T-cell (primary cell): ENCODE measurements at regions of chr20 and their contacts with region 1.

Region 1: DNA sequence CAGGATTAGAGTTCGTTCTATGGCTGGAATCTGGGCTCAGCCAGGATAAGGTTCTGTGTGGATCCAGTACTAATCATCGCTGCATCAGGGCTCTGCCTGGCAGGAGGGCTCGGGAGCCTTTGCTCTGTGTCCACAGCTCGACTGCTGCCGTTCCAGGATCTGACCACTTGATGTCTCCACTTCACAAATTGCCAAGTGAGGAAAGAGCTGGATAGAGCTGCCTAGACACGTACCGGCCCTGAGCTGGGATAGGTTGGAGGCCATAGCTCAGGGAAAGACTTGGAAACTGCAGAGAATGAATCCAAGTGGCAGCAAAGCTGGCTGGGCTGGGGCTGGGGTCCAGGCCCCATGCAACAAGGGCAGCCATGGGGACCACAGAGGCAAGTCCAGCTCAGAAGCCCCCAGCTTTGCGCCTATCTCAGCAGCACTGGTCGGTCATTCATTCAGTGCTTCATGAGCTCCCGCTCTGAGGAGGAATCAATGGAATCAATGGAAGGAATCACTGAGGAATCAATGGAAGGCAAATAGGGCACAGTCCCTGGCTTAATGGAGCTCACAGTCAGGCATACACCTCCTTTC is 38.0 kb upstream of the TOP1 start:
- DNase-seq: peak in 33 of 35 experiments; percentile 22 to 76 (median 47)
- ATAC-seq: peak; percentile 75 to 86 (median 78)
- H3K4me3 ChIP-seq: no peak overlapping the region
- H3K4me3 Mint-ChIP-seq: peak overlapping the region in 2 of 3 donors; percentile 26 to 44
- H3K27ac ChIP-seq: no peak overlapping the region
- H3K27ac Mint-ChIP-seq: peak overlapping the region; percentile 48 to 82
- H3K4me1 ChIP-seq: peaks cover 15 to 27% of the 10 kb centered on the region in 2 experiments
- H3K4me1 Mint-ChIP-seq: peaks cover 34 to 37% (median 36%) of the 10 kb centered on the region in 3 donors
- H3K27me3 ChIP-seq: peaks cover 0 to 2% of the 10 kb centered on the region in 2 experiments
- H3K27me3 Mint-ChIP-seq: no peaks in the 10 kb centered on the region

Region 2: GRCh38 chr20:40728470-40728869 is 262.2 kb before region 1 on chr20:
- CTCF ChIA-PET with region 1: no interaction called
- POLR2A ChIA-PET with region 1: no interaction called
- DNase-seq: no peak
- ATAC-seq: no peak
- H3K4me3 ChIP-seq: no peak overlapping the region
- H3K4me3 Mint-ChIP-seq: no peak overlapping the region
- H3K27ac ChIP-seq: no peak overlapping the region
- H3K27ac Mint-ChIP-seq: no peak overlapping the region
- H3K4me1 ChIP-seq: no peaks in the 10 kb centered on the region
- H3K4me1 Mint-ChIP-seq: no peaks in the 10 kb centered on the region
- H3K27me3 ChIP-seq: peaks cover 0 to 13% of the 10 kb centered on the region in 2 experiments
- H3K27me3 Mint-ChIP-seq: peaks cover 9 to 10% of the 10 kb centered on the region in 2 donors

Region 3: GRCh38 chr20:40980106-40980827 is 10.4 kb before region 1 on chr20:
- CTCF ChIA-PET with region 1: interaction called, 3 to 15 read pairs
- POLR2A ChIA-PET with region 1: no interaction called
- DNase-seq: no peak
- ATAC-seq: no peak
- H3K4me3 ChIP-seq: no peak overlapping the region
- H3K4me3 Mint-ChIP-seq: no peak overlapping the region
- H3K27ac ChIP-seq: no peak overlapping the region
- H3K27ac Mint-ChIP-seq: no peak overlapping the region
- H3K4me1 ChIP-seq: no peaks in the 10 kb centered on the region
- H3K4me1 Mint-ChIP-seq: no peaks in the 10 kb centered on the region
- H3K27me3 ChIP-seq: peaks cover 0 to 13% of the 10 kb centered on the region in 2 experiments
- H3K27me3 Mint-ChIP-seq: peaks cover 22 to 28% of the 10 kb centered on the region in 2 donors

Region 4: GRCh38 chr20:41095110-41095969 is 104.7 kb after region 1 on chr20:
- CTCF ChIA-PET with region 1: interaction called, 28 to 89 read pairs
- POLR2A ChIA-PET with region 1: interaction called in 1 of 2 experiments, 3 read pairs
- DNase-seq: peak; percentile 8 to 81 (median 48)
- ATAC-seq: peak; percentile 60 to 70 (median 65)
- H3K4me3 ChIP-seq: no peak overlapping the region
- H3K4me3 Mint-ChIP-seq: no peak overlapping the region
- H3K27ac ChIP-seq: no peak overlapping the region
- H3K27ac Mint-ChIP-seq: peak overlapping the region in 1 of 2 donors; percentile 55
- H3K4me1 ChIP-seq: no peaks in the 10 kb centered on the region
- H3K4me1 Mint-ChIP-seq: peaks cover 0 to 5% (median 0%) of the 10 kb centered on the region in 3 donors
- H3K27me3 ChIP-seq: no peaks in the 10 kb centered on the region
- H3K27me3 Mint-ChIP-seq: no peaks in the 10 kb centered on the region

Region 5: GRCh38 chr20:41121399-41121798 is 130.8 kb after region 1 on chr20:
- CTCF ChIA-PET with region 1: no interaction called
- POLR2A ChIA-PET with region 1: interaction called in 1 of 2 experiments, 11 read pairs
- DNase-seq: no peak
- ATAC-seq: peak in 1 of 4 experiments; percentile 45
- H3K4me3 ChIP-seq: no peak overlapping the region
- H3K4me3 Mint-ChIP-seq: no peak overlapping the region
- H3K27ac ChIP-seq: no peak overlapping the region
- H3K27ac Mint-ChIP-seq: peak overlapping the region; percentile 59 to 61
- H3K4me1 ChIP-seq: peaks cover 0 to 3% of the 10 kb centered on the region in 2 experiments
- H3K4me1 Mint-ChIP-seq: peaks cover 0 to 10% (median 2%) of the 10 kb centered on the region in 3 donors
- H3K27me3 ChIP-seq: no peaks in the 10 kb centered on the region
- H3K27me3 Mint-ChIP-seq: no peaks in the 10 kb centered on the region

Region 6: DNA sequence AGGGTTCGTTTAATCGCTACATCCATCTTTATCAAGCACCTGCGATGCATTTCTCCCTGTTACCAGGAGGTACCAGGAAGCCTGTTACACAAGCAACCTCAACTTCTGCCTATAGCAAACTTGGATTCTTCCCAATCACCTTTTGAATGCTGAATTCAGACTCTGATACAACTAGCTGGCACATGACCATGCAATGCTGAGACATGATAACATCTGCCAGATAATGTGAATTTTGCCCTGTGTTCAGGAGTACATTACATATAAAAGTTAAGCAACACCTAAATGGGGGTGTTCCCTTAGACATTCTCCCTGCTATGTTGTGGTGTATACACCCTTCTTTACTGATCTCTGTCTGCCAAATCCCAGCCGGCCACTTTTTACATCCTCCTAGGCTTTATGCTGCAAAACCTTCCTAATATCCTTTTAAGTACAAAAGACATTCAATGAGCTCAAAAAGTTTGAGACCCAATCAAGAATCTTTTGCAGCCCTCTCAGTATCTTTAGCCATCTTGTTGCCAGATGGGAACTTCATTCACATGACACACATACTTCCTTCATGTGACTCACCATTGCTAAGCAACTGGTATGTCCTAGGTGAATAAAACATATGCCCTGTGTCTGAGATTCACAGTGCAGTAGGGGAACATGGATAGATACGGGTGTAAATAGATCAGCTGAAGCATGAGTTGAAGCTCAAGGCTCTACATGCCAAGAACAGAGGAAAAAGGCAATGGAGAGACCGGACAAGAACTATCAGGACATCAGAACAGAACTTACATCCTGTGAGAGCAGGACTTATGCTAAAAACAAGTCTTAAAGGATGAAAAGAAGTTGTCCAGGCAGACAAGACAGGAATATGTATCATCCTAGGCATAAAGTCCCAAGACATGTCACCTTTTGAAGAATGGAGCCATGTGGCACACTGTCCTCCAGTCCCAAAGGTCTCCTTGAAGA is 242.6 kb after region 1 on chr20:
- CTCF ChIA-PET with region 1: interaction called in 1 of 2 experiments, 12 read pairs
- POLR2A ChIA-PET with region 1: no interaction called
- DNase-seq: no peak
- ATAC-seq: no peak
- H3K4me3 ChIP-seq: no peak overlapping the region
- H3K4me3 Mint-ChIP-seq: peak overlapping the region in 1 of 3 donors; percentile 59
- H3K27ac ChIP-seq: no peak overlapping the region
- H3K27ac Mint-ChIP-seq: no peak overlapping the region
- H3K4me1 ChIP-seq: peaks cover 11 to 17% of the 10 kb centered on the region in 2 experiments
- H3K4me1 Mint-ChIP-seq: peaks cover 22 to 31% (median 24%) of the 10 kb centered on the region in 3 donors
- H3K27me3 ChIP-seq: no peaks in the 10 kb centered on the region
- H3K27me3 Mint-ChIP-seq: no peaks in the 10 kb centered on the region